ENCODE measurements at regions of chr1 and their contacts with region 1.

Region 1: DNA sequence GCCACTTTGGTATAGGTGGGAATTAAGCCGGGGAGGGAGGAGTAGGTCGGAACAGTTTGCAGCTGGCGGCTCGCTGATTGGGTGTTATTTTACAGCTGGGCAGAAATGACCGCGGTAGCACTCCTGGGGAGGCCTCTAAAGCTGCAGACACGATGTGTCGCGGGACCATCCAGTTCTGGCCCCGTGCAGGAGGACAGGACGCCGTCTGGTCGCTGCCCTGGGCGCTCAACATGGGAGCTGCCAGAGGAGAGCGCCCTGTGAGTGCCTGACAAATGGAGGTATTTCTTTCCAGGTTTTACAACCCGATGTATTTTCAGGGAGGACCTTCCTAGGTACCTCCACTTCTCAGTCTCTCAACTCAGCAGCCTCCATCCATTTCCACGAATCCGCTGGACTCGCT is 46.2 kb downstream of the CDC7 start:
- DNase-seq: no peak
- ATAC-seq: peak in 1 of 3 donors; percentile 9
- H3K4me3 ChIP-seq: no peak overlapping the region
- H3K4me3 Mint-ChIP-seq: peak overlapping the region; percentile 86
- H3K27ac ChIP-seq: peak overlapping the region; percentile 86
- H3K27ac Mint-ChIP-seq: peak overlapping the region; percentile 83 to 99
- H3K4me1 ChIP-seq: peaks cover 75% of the 10 kb centered on the region
- H3K4me1 Mint-ChIP-seq: peaks cover 94 to 95% of the 10 kb centered on the region in 2 donors
- H3K27me3 ChIP-seq: no peaks in the 10 kb centered on the region
- H3K27me3 Mint-ChIP-seq: no peaks in the 10 kb centered on the region
- CTCF ChIP-seq: no peak

Region 2: DNA sequence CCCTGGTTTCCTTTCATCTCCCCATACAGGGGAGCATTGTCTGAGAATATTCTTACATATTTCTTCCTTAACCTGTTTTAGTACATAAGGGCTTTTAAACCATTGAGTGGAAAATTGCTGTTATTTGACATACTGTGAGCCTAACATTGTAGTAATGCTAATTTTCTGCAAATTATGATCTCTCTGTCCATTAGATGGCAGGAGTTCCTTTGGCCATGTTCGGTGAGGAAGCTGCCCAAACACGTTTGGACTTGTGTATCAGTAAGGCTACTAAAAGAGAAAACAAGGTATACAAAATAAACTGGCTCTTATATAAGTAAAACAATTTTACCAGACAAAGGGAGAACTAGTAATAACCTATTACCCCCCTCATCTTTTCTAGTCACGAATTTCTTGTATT is 17.0 kb before region 1 on chr1:
- intact Hi-C with region 1: loop called (anchors 2 kb)
- DNase-seq: peak in 1 of 2 donors; percentile 29
- ATAC-seq: peak in 2 of 3 donors; percentile 21 to 25
- H3K4me3 ChIP-seq: no peak overlapping the region
- H3K4me3 Mint-ChIP-seq: no peak overlapping the region
- H3K27ac ChIP-seq: no peak overlapping the region
- H3K27ac Mint-ChIP-seq: peak overlapping the region; percentile 68 to 84
- H3K4me1 ChIP-seq: peaks cover 42% of the 10 kb centered on the region
- H3K4me1 Mint-ChIP-seq: peaks cover 66 to 68% of the 10 kb centered on the region in 2 donors
- H3K27me3 ChIP-seq: no peaks in the 10 kb centered on the region
- H3K27me3 Mint-ChIP-seq: no peaks in the 10 kb centered on the region
- CTCF ChIP-seq: peak; percentile 27

Region 3: DNA sequence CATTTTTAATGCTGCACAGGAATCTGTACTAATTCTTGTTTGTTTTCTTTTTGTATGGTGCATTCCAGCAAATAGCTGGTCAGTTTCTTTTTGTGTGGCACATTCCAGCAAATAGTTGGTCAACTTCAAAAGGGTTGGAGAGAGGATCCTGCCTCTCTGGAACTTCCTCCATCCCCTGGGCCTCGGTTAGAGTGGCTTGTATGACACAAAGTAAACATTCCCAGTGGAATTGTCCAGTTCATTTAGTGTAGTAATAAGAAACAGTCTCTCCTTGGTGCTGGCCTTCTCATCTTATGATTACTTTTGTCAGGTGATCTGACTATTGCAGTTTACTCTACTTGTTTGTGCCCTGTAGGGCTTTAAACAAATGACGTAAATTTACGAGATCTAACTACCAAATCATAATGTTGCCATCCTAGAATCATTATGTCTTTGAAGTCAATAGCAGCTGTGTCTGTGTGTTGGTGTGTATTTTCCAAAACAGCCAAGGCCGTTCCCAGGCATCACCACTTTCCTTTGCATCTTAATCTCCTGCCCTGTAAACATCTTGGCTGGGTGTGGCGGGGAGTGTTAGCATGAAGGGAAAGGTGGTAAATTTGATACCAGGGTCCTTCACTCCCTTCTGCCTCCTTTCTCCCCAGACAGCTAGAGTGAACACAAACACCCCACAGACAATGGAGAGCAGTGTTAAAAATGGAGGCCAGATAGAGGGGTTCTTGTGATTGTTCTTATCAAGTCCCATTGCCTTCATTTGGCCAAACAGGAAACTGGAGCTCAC is 31.6 kb after region 1 on chr1:
- intact Hi-C with region 1: loop called (anchors 5 kb)
- DNase-seq: no peak
- ATAC-seq: no peak
- H3K4me3 ChIP-seq: no peak overlapping the region
- H3K4me3 Mint-ChIP-seq: peak overlapping the region; percentile 25
- H3K27ac ChIP-seq: no peak overlapping the region
- H3K27ac Mint-ChIP-seq: peak overlapping the region; percentile 86 to 89
- H3K4me1 ChIP-seq: peaks cover 16% of the 10 kb centered on the region
- H3K4me1 Mint-ChIP-seq: peaks cover 56 to 65% of the 10 kb centered on the region in 2 donors
- H3K27me3 ChIP-seq: no peaks in the 10 kb centered on the region
- H3K27me3 Mint-ChIP-seq: no peaks in the 10 kb centered on the region
- CTCF ChIP-seq: no peak

Region 4: GRCh38 chr1:91754348-91754747 is 207.5 kb after region 1 on chr1:
- intact Hi-C with region 1: loop called (anchors 2 kb)
- DNase-seq: no peak
- ATAC-seq: peak; percentile 32 to 61 (median 52)
- H3K4me3 ChIP-seq: no peak overlapping the region
- H3K4me3 Mint-ChIP-seq: peak overlapping the region; percentile 62
- H3K27ac ChIP-seq: peak overlapping the region; percentile 57
- H3K27ac Mint-ChIP-seq: peak overlapping the region; percentile 86 to 87
- H3K4me1 ChIP-seq: peaks cover 36% of the 10 kb centered on the region
- H3K4me1 Mint-ChIP-seq: peaks cover 70 to 76% of the 10 kb centered on the region in 2 donors
- H3K27me3 ChIP-seq: no peaks in the 10 kb centered on the region
- H3K27me3 Mint-ChIP-seq: no peaks in the 10 kb centered on the region
- CTCF ChIP-seq: no peak

Region 5: GRCh38 chr1:91803847-91804545 is 257.1 kb after region 1 on chr1:
- intact Hi-C with region 1: loop called (anchors 2 kb)
- DNase-seq: peak; percentile 56 to 95
- ATAC-seq: peak; percentile 58 to 79 (median 69)
- H3K4me3 ChIP-seq: peak overlapping the region; percentile 8
- H3K4me3 Mint-ChIP-seq: peak overlapping the region; percentile 78
- H3K27ac ChIP-seq: peak overlapping the region; percentile 97
- H3K27ac Mint-ChIP-seq: peak overlapping the region; percentile 95 to 96
- H3K4me1 ChIP-seq: peaks cover 63% of the 10 kb centered on the region
- H3K4me1 Mint-ChIP-seq: peaks cover 89 to 92% of the 10 kb centered on the region in 2 donors
- H3K27me3 ChIP-seq: no peaks in the 10 kb centered on the region
- H3K27me3 Mint-ChIP-seq: no peaks in the 10 kb centered on the region
- CTCF ChIP-seq: no peak

Measured in natural killer cell (primary cell).